ENCODE measurements at regions of chr2 and their contacts with region 1.

Region 1: GRCh38 chr2:75654012-75654411 is 7.4 kb downstream of the MRPL19 start:
- DNase-seq: no peak
- H3K4me3 ChIP-seq: no peak overlapping the region
- H3K27ac ChIP-seq: no peak overlapping the region
- H3K4me1 ChIP-seq: no peaks in the 10 kb centered on the region
- H3K27me3 ChIP-seq: no peaks in the 10 kb centered on the region
- CTCF ChIP-seq: no peak

Region 2: DNA sequence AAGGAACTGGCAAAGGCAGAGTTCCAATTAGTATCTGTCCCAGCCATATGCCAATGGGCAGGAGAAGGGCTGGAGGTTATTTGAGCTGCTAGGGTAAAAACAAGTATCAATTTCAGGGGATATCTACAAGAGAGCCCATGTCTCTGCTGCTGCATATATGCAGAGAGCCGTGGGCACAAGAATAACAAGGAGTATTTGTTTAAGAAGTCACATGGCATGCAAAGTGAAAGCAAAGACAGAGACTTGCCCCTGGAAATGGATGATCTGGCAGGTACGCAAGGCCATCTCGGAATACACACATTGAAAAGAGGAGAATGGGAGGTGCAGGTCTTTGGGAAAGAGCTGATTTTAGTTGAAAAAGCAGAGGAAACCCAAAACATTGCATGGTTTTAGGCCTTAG is 263.8 kb before region 1 on chr2:
- intact Hi-C with region 1: no loop called
- DNase-seq: no peak
- H3K4me3 ChIP-seq: no peak overlapping the region
- H3K27ac ChIP-seq: no peak overlapping the region
- H3K4me1 ChIP-seq: no peaks in the 10 kb centered on the region
- H3K27me3 ChIP-seq: no peaks in the 10 kb centered on the region
- CTCF ChIP-seq: no peak

Region 3: DNA sequence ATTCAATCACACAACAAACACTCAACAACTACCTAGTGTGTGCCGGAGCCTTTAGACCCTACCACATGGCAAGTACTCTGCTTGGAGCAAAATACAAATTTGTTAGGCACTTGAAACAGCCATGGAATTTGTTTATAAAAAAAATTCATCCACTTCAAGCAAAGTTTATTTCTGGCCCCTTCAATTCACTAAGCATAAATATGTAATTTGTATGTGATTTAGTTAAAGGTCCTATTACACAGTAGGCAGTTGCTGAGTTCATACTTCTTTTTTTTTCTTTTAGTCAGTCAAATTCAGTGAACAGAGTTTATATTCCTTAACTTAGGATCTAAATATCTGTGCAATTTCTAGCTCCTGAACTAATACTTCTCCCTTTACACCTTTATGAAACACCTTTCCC is 34.2 kb after region 1 on chr2:
- intact Hi-C with region 1: loop called (anchors 1 kb)
- DNase-seq: no peak
- H3K4me3 ChIP-seq: no peak overlapping the region
- H3K27ac ChIP-seq: no peak overlapping the region
- H3K4me1 ChIP-seq: no peaks in the 10 kb centered on the region
- H3K27me3 ChIP-seq: no peaks in the 10 kb centered on the region
- CTCF ChIP-seq: no peak

Measured in ascending aorta (tissue), 2 donors.